CD4-positive, alpha-beta T cell (primary cell): ENCODE measurements at regions of chr9 and their contacts with region 1.

Region 1: GRCh38 chr9:89278997-89279739 is 31.8 kb upstream of the CKS2 start:
- DNase-seq: peak in 4 of 14 experiments; percentile 11 to 53 (median 46)
- ATAC-seq: no peak
- H3K4me3 ChIP-seq: no peak overlapping the region
- H3K4me3 Mint-ChIP-seq: no peak overlapping the region
- H3K27ac ChIP-seq: no peak overlapping the region
- H3K27ac Mint-ChIP-seq: no peak overlapping the region
- H3K4me1 ChIP-seq: peaks cover 14% of the 10 kb centered on the region
- H3K4me1 Mint-ChIP-seq: peaks cover 27% of the 10 kb centered on the region
- H3K27me3 ChIP-seq: no peaks in the 10 kb centered on the region
- H3K27me3 Mint-ChIP-seq: peaks cover 4% of the 10 kb centered on the region
- CTCF ChIP-seq: peak; percentile 79

Region 2: DNA sequence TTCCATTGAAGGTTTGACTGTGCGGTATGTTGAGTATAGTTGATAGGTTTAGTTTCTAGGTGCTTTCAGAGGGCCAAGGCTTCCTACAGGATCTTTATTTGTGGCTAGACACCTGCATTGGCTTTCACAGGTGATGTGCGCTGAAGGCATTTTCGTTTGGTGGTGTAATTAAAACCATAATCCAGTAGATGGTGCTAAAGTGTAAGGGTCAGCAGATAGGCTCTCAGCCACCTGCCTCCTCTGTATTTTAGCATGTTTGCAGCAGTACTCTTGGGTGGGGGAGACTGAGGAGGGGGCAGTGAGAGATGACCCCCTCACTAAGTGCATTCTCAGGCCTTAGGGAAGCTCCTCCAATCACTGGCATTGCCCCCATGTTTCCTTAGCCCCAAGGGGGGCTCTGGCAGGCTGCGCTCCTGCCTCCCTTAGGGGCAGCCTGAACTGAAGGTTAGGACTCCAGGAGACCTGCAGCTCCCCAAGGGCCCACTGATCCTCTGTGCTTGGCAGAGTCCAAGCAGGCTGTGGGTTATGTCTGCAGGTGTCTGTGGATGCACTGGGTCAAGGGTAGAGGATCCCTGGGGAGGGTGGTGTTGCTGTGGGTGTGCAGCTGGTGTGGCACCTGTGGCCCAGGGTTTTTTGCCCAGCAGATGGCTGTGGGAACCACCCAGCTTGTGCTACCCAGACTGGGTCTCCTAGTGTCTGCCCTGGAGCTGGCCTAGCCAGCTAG is 1328.2 kb before region 1 on chr9:
- CTCF ChIA-PET with region 1: no interaction called
- POLR2A ChIA-PET with region 1: no interaction called
- intact Hi-C with region 1: loop called in 1 of 2 experiments (anchors 5 kb)
- DNase-seq: peak in 2 of 14 experiments; percentile 24 to 42
- ATAC-seq: peak; percentile 26
- H3K4me3 ChIP-seq: no peak overlapping the region
- H3K4me3 Mint-ChIP-seq: no peak overlapping the region
- H3K27ac ChIP-seq: no peak overlapping the region
- H3K27ac Mint-ChIP-seq: no peak overlapping the region
- H3K4me1 ChIP-seq: peaks cover 3% of the 10 kb centered on the region
- H3K4me1 Mint-ChIP-seq: peaks cover 6% of the 10 kb centered on the region
- H3K27me3 ChIP-seq: peaks cover 0 to 3% of the 10 kb centered on the region in 2 experiments
- H3K27me3 Mint-ChIP-seq: peaks cover 19% of the 10 kb centered on the region
- CTCF ChIP-seq: peak; percentile 25

Region 3: DNA sequence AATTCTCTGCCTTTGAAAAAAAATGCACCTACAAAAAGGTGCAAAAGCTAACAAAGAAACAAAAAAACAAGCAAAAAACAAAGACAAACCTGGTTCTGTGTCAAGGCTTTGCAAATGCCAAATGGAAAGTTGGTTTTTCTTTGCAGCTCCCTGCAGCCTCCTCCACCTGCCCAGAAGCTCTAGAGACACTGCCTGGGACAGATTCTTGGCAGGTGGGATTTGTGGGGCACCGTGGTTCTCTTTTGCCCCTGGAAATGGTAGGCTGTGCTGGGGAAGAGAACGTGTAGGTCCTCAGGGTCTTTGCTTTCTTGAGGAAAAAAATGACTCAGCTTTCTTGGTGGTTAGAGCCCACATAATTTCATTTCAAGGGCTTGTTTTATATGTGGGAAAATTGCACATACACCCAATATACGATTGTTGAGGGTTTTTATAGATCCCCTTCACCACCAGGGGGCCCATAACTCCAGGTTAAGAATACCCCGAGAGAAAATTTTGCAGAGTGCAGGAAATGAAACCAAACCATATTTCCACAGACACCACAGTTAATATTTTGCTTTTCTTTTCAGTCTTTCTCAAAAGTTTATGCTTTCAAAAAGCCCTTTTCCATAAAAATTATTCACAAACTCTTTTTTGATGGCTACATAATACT is 685.5 kb before region 1 on chr9:
- CTCF ChIA-PET with region 1: no interaction called
- POLR2A ChIA-PET with region 1: no interaction called
- intact Hi-C with region 1: loop called in 1 of 2 experiments (anchors 2 kb)
- DNase-seq: peak in 13 of 14 experiments; percentile 4 to 71 (median 35)
- ATAC-seq: no peak
- H3K4me3 ChIP-seq: no peak overlapping the region
- H3K4me3 Mint-ChIP-seq: no peak overlapping the region
- H3K27ac ChIP-seq: no peak overlapping the region
- H3K27ac Mint-ChIP-seq: no peak overlapping the region
- H3K4me1 ChIP-seq: no peaks in the 10 kb centered on the region
- H3K4me1 Mint-ChIP-seq: peaks cover 5% of the 10 kb centered on the region
- H3K27me3 ChIP-seq: peaks cover 4 to 8% of the 10 kb centered on the region in 2 experiments
- H3K27me3 Mint-ChIP-seq: peaks cover 23% of the 10 kb centered on the region
- CTCF ChIP-seq: peak; percentile 73